Activated CD4-positive, alpha-beta memory T cell treated with anti-CD3 and anti-CD28 coated beads for 36 hours (primary cell): ENCODE measurements at regions of chr16 and their contacts with region 1.

Region 1: GRCh38 chr16:21300309-21301167 is 22.4 kb upstream of the CRYM start:
- DNase-seq: peak; percentile 77
- H3K4me3 Mint-ChIP-seq: peak overlapping the region; percentile 90
- H3K27ac Mint-ChIP-seq: no peak overlapping the region
- H3K4me1 Mint-ChIP-seq: peaks cover 33% of the 10 kb centered on the region
- H3K27me3 Mint-ChIP-seq: peaks cover 4% of the 10 kb centered on the region

Region 2: DNA sequence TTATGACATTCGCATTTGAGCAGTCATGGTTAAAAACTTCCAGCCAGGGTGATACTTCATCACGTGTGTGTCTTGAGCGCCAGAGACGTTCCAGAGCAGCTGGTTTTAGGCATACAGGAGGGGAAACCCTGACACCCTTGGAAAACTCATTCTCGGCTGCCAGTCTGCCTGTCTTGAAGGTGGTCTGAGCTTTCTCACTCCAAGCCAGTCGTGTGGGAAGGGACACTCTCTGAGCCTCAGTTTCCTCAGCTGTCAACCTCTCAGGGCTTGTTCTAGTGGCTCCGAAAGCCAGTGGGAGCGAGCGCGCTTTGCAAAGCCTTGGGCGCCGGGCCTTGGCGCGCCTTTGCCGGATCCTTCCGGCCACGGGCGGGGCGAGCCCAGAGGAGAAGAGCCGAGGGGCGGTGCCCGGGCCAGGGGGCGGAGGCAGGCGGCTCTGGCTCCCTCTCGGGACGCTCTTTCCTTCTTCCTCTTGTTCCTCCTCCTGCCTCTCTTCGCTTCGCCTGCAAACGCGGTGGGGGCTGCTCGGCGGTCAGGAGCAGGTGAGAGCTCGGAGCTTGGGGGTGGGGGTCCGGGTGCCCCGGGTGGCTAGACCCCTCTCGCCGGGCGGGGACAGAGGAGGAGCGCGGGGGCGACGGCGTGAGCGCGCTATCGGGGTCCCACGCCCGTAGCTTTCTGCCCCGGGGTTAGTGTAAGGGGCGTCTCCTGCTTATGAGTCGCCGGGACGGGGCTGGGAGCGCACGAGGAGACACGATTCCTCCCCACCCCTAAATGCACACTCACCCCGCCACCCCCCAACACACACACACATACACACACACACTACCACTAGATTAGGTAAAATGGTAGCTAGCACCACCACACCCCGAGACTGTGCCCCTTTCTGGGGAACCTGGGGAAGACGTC is 142.1 kb before region 1 on chr16 and contains the start of gene LDAF1:
- CTCF ChIA-PET with region 1: interaction called, 28 read pairs
- POLR2A ChIA-PET with region 1: no interaction called
- intact Hi-C with region 1: loop called (anchors 1 kb)
- DNase-seq: peak; percentile 86
- H3K4me3 Mint-ChIP-seq: peak within 1 kb of the TSS; percentile 77
- H3K27ac Mint-ChIP-seq: peak within 1 kb of the TSS; percentile 5
- H3K4me1 Mint-ChIP-seq: peaks cover 24% of the 10 kb centered on the region
- H3K27me3 Mint-ChIP-seq: no peaks in the 10 kb centered on the region
- total RNA-seq, gene LDAF1: 13.9 to 15.1 TPM

Region 3: DNA sequence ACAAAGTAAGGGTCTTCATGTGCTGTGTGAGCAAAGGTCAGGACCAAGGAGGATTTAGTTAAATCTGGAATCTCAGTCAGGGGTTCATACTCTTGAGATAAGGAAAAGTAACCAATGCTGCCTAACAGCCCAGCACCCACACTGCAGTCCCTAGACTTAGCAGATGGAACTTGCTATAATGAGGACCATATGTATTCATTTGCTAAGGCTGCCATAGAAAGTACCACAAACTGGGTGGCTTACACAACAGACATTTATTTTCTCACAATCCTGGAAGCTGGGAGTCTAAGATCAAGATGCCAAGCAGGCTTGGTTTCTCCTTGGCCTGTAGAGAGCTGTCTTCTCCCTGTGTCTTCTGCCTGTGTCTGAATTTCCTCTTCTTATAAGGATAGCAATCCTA is 109.9 kb before region 1 on chr16:
- CTCF ChIA-PET with region 1: interaction called, 27 read pairs
- POLR2A ChIA-PET with region 1: no interaction called
- intact Hi-C with region 1: loop called (anchors 1 kb)
- DNase-seq: no peak
- H3K4me3 Mint-ChIP-seq: no peak overlapping the region
- H3K27ac Mint-ChIP-seq: no peak overlapping the region
- H3K4me1 Mint-ChIP-seq: peaks cover 22% of the 10 kb centered on the region
- H3K27me3 Mint-ChIP-seq: peaks cover 11% of the 10 kb centered on the region

Region 4: DNA sequence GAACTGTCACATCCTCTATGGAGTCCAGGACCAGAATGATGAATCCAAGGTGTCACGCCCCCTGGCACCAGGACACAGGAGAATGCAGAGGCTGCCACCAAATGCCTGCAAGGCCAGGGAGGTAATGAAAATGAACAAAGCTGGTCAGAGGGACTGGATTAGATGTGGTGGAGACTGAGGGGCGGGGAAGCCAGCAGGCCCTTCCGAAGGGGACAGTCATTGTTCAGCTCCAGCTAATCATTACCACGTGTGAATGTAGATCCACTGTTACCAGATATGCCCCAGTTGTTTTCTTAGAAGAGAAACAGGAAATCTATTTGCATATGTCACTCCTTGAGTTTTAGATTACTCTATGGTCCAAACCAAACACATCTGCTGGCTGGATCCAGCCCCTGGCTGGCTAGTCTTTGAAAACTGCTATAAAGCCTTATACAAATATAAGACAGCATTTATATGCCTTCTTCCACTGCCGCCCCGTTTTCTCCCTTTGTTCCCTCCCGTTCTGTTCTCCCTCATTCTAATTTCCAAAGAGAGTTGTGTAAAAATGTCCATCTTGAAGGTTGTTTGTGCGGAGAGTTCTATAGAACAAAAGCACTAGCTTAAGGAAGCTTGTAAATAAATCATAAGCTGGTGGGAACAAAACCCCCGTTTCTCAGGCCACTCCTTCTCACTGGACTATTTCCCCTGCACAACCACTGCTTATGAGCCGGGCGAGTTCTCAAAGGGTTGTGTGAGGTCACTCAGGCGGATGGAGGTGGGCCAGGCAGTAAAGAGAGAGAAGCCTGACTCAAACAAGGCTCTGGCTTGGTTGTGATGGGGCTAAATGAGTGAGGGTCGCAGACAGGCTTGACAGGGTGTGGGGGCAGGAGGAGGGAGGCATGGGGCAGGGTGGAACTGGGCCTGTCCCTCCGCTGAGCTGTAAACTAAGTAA is 36.6 kb before region 1 on chr16:
- CTCF ChIA-PET with region 1: no interaction called
- POLR2A ChIA-PET with region 1: no interaction called
- intact Hi-C with region 1: no loop called
- DNase-seq: no peak
- H3K4me3 Mint-ChIP-seq: no peak overlapping the region
- H3K27ac Mint-ChIP-seq: no peak overlapping the region
- H3K4me1 Mint-ChIP-seq: no peaks in the 10 kb centered on the region
- H3K27me3 Mint-ChIP-seq: peaks cover 2% of the 10 kb centered on the region

Region 5: DNA sequence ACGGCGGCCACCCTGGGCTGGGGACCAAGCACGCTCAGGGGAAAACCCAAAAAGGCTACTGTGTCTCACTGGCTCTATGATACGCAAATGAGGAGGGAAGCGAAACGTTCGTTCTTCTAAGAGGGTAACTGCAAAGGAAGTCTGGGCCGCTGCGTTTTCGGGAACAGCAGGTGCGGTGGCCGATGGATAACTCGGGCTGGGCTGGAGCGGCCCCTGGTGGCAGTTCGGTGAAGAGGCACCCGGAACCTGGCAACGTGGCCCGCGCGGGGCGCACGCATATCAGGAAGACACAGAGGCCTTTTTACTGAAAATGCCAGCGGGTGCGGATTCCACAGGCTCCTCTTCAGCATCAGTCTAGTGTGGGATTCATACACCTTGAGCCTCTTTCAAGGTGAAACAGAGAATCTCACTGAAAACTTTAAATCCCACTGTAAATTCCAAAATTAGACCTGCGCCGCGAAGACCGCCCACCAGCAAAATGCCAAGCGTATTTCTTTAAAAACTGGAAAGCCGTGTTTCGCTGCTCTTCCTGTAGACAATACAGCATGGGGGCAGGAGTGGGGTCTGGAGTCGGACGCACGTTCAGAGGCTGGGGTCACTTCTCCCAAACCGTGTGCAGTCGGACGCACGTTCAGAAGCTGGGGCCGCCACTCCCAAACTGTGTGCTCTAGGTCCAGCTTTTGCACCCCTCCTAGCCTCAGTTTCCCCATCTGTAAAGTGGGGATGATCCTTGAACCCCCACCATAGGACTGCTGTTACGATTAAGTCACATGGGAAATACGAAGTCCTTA is 254.5 kb after region 1 on chr16:
- CTCF ChIA-PET with region 1: no interaction called
- POLR2A ChIA-PET with region 1: no interaction called
- intact Hi-C with region 1: loop called (anchors 10 kb)
- DNase-seq: peak; percentile 95
- H3K4me3 Mint-ChIP-seq: peak overlapping the region; percentile 18
- H3K27ac Mint-ChIP-seq: peak overlapping the region; percentile 25
- H3K4me1 Mint-ChIP-seq: peaks cover 8% of the 10 kb centered on the region
- H3K27me3 Mint-ChIP-seq: peaks cover 4% of the 10 kb centered on the region